ENCODE measurements at regions of chr2 and their contacts with region 1.

Region 1: GRCh38 chr2:174697255-174697654 is 67.0 kb downstream of the CHRNA1 start:
- DNase-seq: peak; percentile 72
- H3K4me3 Mint-ChIP-seq: no peak overlapping the region
- H3K27ac Mint-ChIP-seq: no peak overlapping the region
- H3K4me1 Mint-ChIP-seq: peaks cover 3% of the 10 kb centered on the region
- H3K27me3 Mint-ChIP-seq: peaks cover 29% of the 10 kb centered on the region

Region 2: GRCh38 chr2:174682578-174683391 is 14.5 kb before region 1 on chr2:
- CTCF ChIA-PET with region 1: interaction called, 78 read pairs
- POLR2A ChIA-PET with region 1: interaction called, 3 read pairs
- DNase-seq: peak; percentile 64
- H3K4me3 Mint-ChIP-seq: peak overlapping the region; percentile 84
- H3K27ac Mint-ChIP-seq: peak overlapping the region; percentile 76
- H3K4me1 Mint-ChIP-seq: peaks cover 62% of the 10 kb centered on the region
- H3K27me3 Mint-ChIP-seq: no peaks in the 10 kb centered on the region

Region 3: GRCh38 chr2:174717273-174717672 is 20.0 kb after region 1 on chr2:
- CTCF ChIA-PET with region 1: interaction called, 50 read pairs
- POLR2A ChIA-PET with region 1: no interaction called
- DNase-seq: peak; percentile 35
- H3K4me3 Mint-ChIP-seq: peak overlapping the region; percentile 28
- H3K27ac Mint-ChIP-seq: peak overlapping the region; percentile 17
- H3K4me1 Mint-ChIP-seq: peaks cover 31% of the 10 kb centered on the region
- H3K27me3 Mint-ChIP-seq: peaks cover 8% of the 10 kb centered on the region

Region 4: GRCh38 chr2:174748948-174749347 is 51.7 kb after region 1 on chr2:
- CTCF ChIA-PET with region 1: interaction called, 63 read pairs
- POLR2A ChIA-PET with region 1: interaction called, 3 read pairs
- DNase-seq: peak; percentile 75
- H3K4me3 Mint-ChIP-seq: no peak overlapping the region
- H3K27ac Mint-ChIP-seq: no peak overlapping the region
- H3K4me1 Mint-ChIP-seq: peaks cover 42% of the 10 kb centered on the region
- H3K27me3 Mint-ChIP-seq: peaks cover 20% of the 10 kb centered on the region

Region 5: GRCh38 chr2:174985630-174986029 is 288.4 kb after region 1 on chr2:
- CTCF ChIA-PET with region 1: interaction called, 24 read pairs
- POLR2A ChIA-PET with region 1: no interaction called
- DNase-seq: no peak
- H3K4me3 Mint-ChIP-seq: no peak overlapping the region
- H3K27ac Mint-ChIP-seq: no peak overlapping the region
- H3K4me1 Mint-ChIP-seq: peaks cover 2% of the 10 kb centered on the region
- H3K27me3 Mint-ChIP-seq: peaks cover 4% of the 10 kb centered on the region

Measured in activated CD4-positive, alpha-beta memory T cell treated with anti-CD3 and anti-CD28 coated beads, Interleukin-2, amount 10 ng/mL, durations not matched to agents 7 days and 5 days (primary cell).